PC-9 (cell line): ENCODE measurements at regions of chr2 and their contacts with region 1.

Region 1: GRCh38 chr2:221792971-221793521 is 220.9 kb upstream of the EPHA4 start:
- DNase-seq: no peak
- H3K4me3 ChIP-seq: 0 out of 2 replicates have a peak overlapping the region, but pooled peaks have one; percentile 18
- H3K27ac ChIP-seq: peak overlapping the region; percentile 86
- H3K4me1 ChIP-seq: peaks cover 50% of the 10 kb centered on the region
- H3K27me3 ChIP-seq: no peaks in the 10 kb centered on the region
- CTCF ChIP-seq: no peak

Region 2: DNA sequence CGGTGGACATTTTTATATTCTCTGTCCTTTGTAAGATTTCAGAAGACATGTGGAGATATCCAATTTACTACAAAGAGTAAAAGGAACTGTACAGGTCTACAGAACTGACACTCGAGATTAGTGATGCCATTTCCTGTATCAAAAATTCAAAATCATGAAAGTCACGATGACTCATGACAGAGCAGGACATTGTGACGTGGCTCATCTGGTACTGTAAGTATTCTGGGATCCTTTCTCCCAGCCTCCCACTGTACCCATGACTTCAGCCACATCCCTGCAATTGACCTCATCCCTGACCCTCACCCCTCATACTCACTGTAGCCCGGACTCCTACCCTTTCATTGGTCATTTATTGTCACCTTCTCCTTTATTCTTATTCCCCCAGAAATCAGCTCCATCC is 957.5 kb before region 1 on chr2:
- CTCF ChIA-PET with region 1: no interaction called
- POLR2A ChIA-PET with region 1: no interaction called
- intact Hi-C with region 1: no loop called
- DNase-seq: no peak
- H3K4me3 ChIP-seq: no peak overlapping the region
- H3K27ac ChIP-seq: no peak overlapping the region
- H3K4me1 ChIP-seq: no peaks in the 10 kb centered on the region
- H3K27me3 ChIP-seq: no peaks in the 10 kb centered on the region
- CTCF ChIP-seq: no peak

Region 3: GRCh38 chr2:221629468-221629867 is 163.6 kb before region 1 on chr2:
- CTCF ChIA-PET with region 1: no interaction called
- POLR2A ChIA-PET with region 1: no interaction called
- intact Hi-C with region 1: loop called (anchors 5 kb)
- DNase-seq: peak; percentile 62 to 82
- H3K4me3 ChIP-seq: no peak overlapping the region
- H3K27ac ChIP-seq: no peak overlapping the region
- H3K4me1 ChIP-seq: peaks cover 12% of the 10 kb centered on the region
- H3K27me3 ChIP-seq: no peaks in the 10 kb centered on the region
- CTCF ChIP-seq: no peak

Region 4: GRCh38 chr2:221641181-221641871 is 151.7 kb before region 1 on chr2:
- CTCF ChIA-PET with region 1: no interaction called
- POLR2A ChIA-PET with region 1: no interaction called
- intact Hi-C with region 1: loop called (anchors 1 kb)
- DNase-seq: peak; percentile 78 to 85
- H3K4me3 ChIP-seq: no peak overlapping the region
- H3K27ac ChIP-seq: no peak overlapping the region
- H3K4me1 ChIP-seq: no peaks in the 10 kb centered on the region
- H3K27me3 ChIP-seq: no peaks in the 10 kb centered on the region
- CTCF ChIP-seq: no peak

Region 5: DNA sequence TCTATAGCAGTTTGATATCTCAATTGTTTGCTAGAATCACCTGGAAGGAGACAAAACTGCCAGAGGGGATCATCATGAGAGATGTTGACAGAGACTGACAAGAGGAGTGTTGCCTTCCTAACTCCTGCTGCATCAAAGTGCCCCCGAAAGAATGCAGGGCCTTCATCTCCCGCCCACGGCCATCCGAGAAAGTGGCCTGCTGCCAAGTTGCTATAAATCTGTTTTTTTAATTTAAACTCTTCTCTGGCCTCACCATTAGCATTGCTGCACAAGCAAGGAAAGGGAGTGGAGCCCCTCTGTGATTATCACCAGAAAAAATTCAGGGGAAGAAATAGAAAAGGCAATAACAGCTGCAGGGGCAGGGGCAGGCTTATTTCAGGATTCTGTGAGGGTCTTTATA is 17.2 kb after region 1 on chr2:
- CTCF ChIA-PET with region 1: no interaction called
- POLR2A ChIA-PET with region 1: interaction called, 31 read pairs
- intact Hi-C with region 1: no loop called
- DNase-seq: no peak
- H3K4me3 ChIP-seq: no peak overlapping the region
- H3K27ac ChIP-seq: no peak overlapping the region
- H3K4me1 ChIP-seq: peaks cover 30% of the 10 kb centered on the region
- H3K27me3 ChIP-seq: no peaks in the 10 kb centered on the region
- CTCF ChIP-seq: no peak

Region 6: DNA sequence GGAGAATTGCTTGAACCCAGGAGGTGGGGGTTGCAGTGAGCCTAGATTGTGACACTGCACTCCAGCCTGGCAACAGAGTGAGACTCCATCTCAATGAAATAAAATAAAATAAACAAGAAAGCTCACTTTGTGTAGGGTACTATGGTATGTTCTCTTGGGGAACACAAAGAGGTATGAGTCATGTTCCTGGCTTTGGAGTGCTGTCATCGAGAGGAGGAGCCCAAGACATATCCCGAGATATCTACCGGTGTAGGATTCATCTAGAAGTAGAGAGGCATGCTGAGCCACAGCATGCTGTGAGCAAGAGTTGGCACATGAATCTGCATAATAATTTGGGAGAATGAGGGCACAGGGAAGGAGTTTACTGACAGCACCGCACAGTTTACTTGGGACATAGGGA is 24.0 kb after region 1 on chr2:
- CTCF ChIA-PET with region 1: no interaction called
- POLR2A ChIA-PET with region 1: interaction called, 31 read pairs
- intact Hi-C with region 1: no loop called
- DNase-seq: peak; percentile 43 to 51
- H3K4me3 ChIP-seq: no peak overlapping the region
- H3K27ac ChIP-seq: no peak overlapping the region
- H3K4me1 ChIP-seq: peaks cover 24% of the 10 kb centered on the region
- H3K27me3 ChIP-seq: no peaks in the 10 kb centered on the region
- CTCF ChIP-seq: no peak

Region 7: GRCh38 chr2:221850059-221850458 is 57.0 kb after region 1 on chr2:
- CTCF ChIA-PET with region 1: no interaction called
- POLR2A ChIA-PET with region 1: interaction called, 7 read pairs
- intact Hi-C with region 1: loop called (anchors 1 kb)
- DNase-seq: peak; percentile 34 to 84
- H3K4me3 ChIP-seq: no peak overlapping the region
- H3K27ac ChIP-seq: no peak overlapping the region
- H3K4me1 ChIP-seq: peaks cover 48% of the 10 kb centered on the region
- H3K27me3 ChIP-seq: no peaks in the 10 kb centered on the region
- CTCF ChIP-seq: no peak

Region 8: GRCh38 chr2:221958224-221958623 is 165.2 kb after region 1 on chr2:
- CTCF ChIA-PET with region 1: no interaction called
- POLR2A ChIA-PET with region 1: no interaction called
- intact Hi-C with region 1: loop called (anchors 5 kb)
- DNase-seq: peak in 1 of 2 experiments; percentile 26
- H3K4me3 ChIP-seq: no peak overlapping the region
- H3K27ac ChIP-seq: no peak overlapping the region
- H3K4me1 ChIP-seq: peaks cover 7% of the 10 kb centered on the region; the same call in 1 of the 2 replicates
- H3K27me3 ChIP-seq: no peaks in the 10 kb centered on the region
- CTCF ChIP-seq: peak; percentile 35; the same call in 1 of the 2 replicates